Adrenal gland (tissue), 19 donors: ENCODE measurements at regions of chr1 and their contacts with region 1.

Region 1: GRCh38 chr1:91345395-91346005 is 59.1 kb downstream of the HFM1 start:
- DNase-seq: no peak
- H3K4me3 ChIP-seq: no peak overlapping the region
- H3K27ac ChIP-seq: no peak overlapping the region
- H3K4me1 ChIP-seq: no peaks in the 10 kb centered on the region
- H3K27me3 ChIP-seq: no peaks in the 10 kb centered on the region
- CTCF ChIP-seq: no peak
- POLR2A ChIP-seq: no peak

Region 2: GRCh38 chr1:90402893-90403849 is 942.3 kb before region 1 on chr1:
- intact Hi-C with region 1: loop called in 1 of 2 experiments (anchors 10 kb)
- DNase-seq: peak in 1 of 7 donors; percentile 7
- H3K4me3 ChIP-seq: no peak overlapping the region
- H3K27ac ChIP-seq: no peak overlapping the region
- H3K4me1 ChIP-seq: no peaks in the 10 kb centered on the region
- H3K27me3 ChIP-seq: no peaks in the 10 kb centered on the region
- CTCF ChIP-seq: no peak
- POLR2A ChIP-seq: no peak